Activated naive CD8-positive, alpha-beta T cell treated with anti-CD3 and anti-CD28 coated beads, Interleukin-2, amount 10 ng/mL, durations not matched to agents 7 days and 5 days (primary cell): ENCODE measurements at regions of chr10 and their contacts with region 1.

Region 1: DNA sequence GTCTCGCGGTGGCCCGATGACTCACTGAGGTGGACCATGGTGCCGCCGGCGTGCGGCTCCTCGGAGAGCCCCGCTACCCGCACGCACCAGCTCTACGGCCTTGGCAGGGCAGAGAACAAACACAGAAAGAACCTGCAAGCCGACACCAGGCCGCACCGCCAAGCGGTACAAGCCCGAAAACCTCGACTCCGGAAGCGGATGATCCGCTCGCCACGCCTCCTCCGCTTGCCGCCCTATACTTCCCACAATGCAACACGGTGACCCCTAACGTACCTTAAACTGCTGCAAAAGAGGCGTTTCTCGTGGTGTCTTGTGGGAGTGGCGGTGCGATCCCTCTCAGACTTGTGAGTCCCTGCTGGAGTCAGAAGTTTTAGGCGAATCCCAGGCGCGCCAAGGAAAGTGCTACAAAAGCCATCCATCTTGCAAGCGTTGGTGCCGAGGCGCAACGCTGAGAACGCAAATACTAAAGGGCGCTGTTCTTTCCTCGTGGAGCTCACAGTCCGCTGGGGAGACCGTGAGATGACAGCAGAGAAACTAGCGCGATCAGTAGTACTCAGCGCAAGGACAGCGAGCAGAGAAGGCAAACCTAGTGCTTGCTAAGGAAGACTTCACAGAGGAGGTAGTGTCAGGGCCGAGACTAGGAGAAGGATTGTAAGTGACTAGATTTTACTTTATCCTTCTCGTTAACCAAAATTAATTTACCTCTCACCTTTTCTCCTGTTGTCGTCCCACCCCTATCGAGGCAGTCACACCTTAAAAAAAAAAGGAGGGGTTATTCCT is at the start of gene MRPS16:
- DNase-seq: peak; percentile 91
- ATAC-seq: peak; percentile 78
- H3K4me3 Mint-ChIP-seq: peak within 1 kb of the TSS; percentile 93
- H3K27ac Mint-ChIP-seq: peak within 1 kb of the TSS; percentile 82
- H3K4me1 Mint-ChIP-seq: peaks cover 22% of the 10 kb centered on the region
- H3K27me3 Mint-ChIP-seq: no peaks in the 10 kb centered on the region
- total RNA-seq, gene MRPS16: 73.5 to 78.4 TPM

Region 2: GRCh38 chr10:73332221-73332778 is 79.7 kb after region 1 on chr10:
- POLR2A ChIA-PET with region 1: no interaction called
- DNase-seq: no peak
- ATAC-seq: no peak
- H3K4me3 Mint-ChIP-seq: no peak overlapping the region
- H3K27ac Mint-ChIP-seq: no peak overlapping the region
- H3K4me1 Mint-ChIP-seq: no peaks in the 10 kb centered on the region
- H3K27me3 Mint-ChIP-seq: peaks cover 4% of the 10 kb centered on the region

Region 3: GRCh38 chr10:73358331-73359279 is 106.0 kb after region 1 on chr10 and contains the start of gene CFAP70:
- POLR2A ChIA-PET with region 1: interaction called, 14 read pairs
- DNase-seq: peak; percentile 91
- ATAC-seq: peak; percentile 99
- H3K4me3 Mint-ChIP-seq: peak within 1 kb of the TSS; percentile 97
- H3K27ac Mint-ChIP-seq: peak within 1 kb of the TSS; percentile 91
- H3K4me1 Mint-ChIP-seq: peaks cover 9% of the 10 kb centered on the region
- H3K27me3 Mint-ChIP-seq: no peaks in the 10 kb centered on the region
- total RNA-seq, gene CFAP70: 2.0 to 2.2 TPM